ENCODE measurements at regions of chr9 and their contacts with region 1.

Region 1: GRCh38 chr9:123834889-123835562 is 94.9 kb downstream of the DENND1A start:
- H3K4me3 Mint-ChIP-seq: peak overlapping the region; percentile 72
- H3K27ac Mint-ChIP-seq: peak overlapping the region; percentile 96
- H3K4me1 Mint-ChIP-seq: peaks cover 32% of the 10 kb centered on the region
- H3K27me3 Mint-ChIP-seq: no peaks in the 10 kb centered on the region

Region 2: DNA sequence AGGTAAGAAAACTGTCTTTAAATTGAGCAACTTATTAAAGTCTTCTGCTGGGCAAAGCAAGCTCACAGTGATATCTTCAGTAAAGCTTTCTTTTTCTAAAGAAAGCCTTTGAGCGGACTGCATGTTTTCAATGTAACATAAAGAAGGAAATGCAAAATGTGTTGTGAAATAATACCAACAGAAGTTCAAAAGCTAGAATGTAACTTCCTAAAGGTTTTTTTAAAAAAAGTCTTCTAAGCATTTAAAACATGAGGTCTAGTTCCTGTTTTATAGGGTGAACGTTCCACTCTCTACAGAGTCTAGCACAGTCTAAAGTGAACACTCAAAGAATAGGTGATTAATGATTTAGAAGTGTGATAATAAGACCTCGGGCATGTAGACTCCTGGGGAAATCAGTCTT is 32.0 kb after region 1 on chr9:
- intact Hi-C with region 1: loop called (anchors 2 kb)
- H3K4me3 Mint-ChIP-seq: peak overlapping the region; percentile 40
- H3K27ac Mint-ChIP-seq: peak overlapping the region; percentile 96
- H3K4me1 Mint-ChIP-seq: peaks cover 58% of the 10 kb centered on the region
- H3K27me3 Mint-ChIP-seq: no peaks in the 10 kb centered on the region

Region 3: GRCh38 chr9:124011420-124012301 is 176.6 kb after region 1 on chr9 and contains the start of gene LHX2:
- intact Hi-C with region 1: loop called (anchors 10 kb)
- H3K4me3 Mint-ChIP-seq: peak within 1 kb of the TSS; percentile 74
- H3K27ac Mint-ChIP-seq: peak within 1 kb of the TSS; percentile 27
- H3K4me1 Mint-ChIP-seq: peaks cover 76% of the 10 kb centered on the region
- H3K27me3 Mint-ChIP-seq: peaks cover 96% of the 10 kb centered on the region

Region 4: GRCh38 chr9:124126571-124127289 is 291.7 kb after region 1 on chr9:
- intact Hi-C with region 1: no loop called
- H3K4me3 Mint-ChIP-seq: no peak overlapping the region
- H3K27ac Mint-ChIP-seq: no peak overlapping the region
- H3K4me1 Mint-ChIP-seq: peaks cover 24% of the 10 kb centered on the region
- H3K27me3 Mint-ChIP-seq: peaks cover 4% of the 10 kb centered on the region